Activated CD8-positive, alpha-beta T cell treated with anti-CD3 and anti-CD28 coated beads, Interleukin-2, amount 10 ng/mL, durations not matched to agents 7 days and 5 days (primary cell): ENCODE measurements at regions of chr19 and their contacts with region 1.

Region 1: DNA sequence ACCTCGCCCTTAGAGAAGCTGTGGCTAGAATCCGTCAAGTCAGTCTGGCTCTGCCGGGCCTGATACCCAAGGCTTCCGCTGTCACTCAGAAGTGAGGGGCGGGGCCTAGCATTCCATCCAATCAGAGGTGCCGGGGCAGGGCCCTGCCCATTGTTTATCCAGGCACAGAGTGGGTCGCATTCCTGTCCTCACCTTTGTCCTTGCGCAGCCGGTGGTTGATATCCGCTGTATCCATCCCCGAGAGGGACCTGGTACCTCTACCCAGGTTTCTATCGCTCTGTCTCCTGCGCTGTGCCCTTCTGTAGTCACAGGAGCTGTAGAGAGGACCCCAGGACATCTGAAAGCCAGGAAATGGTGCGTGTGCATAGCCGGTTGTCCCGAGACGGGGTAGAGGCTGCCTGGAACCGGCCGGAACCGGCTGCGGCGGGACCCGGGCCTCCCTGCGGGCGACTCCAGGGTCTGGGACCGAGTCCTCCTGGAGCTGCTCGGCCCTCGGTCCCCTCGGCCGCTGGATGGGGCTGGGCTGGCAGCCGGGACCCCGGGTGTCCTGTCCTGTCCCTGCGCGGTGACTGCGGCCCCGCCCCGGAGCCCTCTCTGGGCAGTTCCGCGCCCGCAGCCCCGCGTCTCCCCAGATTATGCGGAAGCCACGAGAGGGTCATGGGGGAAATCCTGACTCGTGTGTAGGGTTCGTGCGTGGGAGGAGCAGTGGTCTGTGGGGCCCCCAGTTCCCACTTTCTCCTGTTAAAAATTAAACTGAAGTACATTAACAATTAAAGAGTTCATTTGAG is at the start of gene ZNF763:
- DNase-seq: peak; percentile 94
- ATAC-seq: peak; percentile 97
- H3K4me3 Mint-ChIP-seq: peak within 1 kb of the TSS; percentile 88
- H3K27ac Mint-ChIP-seq: peak within 1 kb of the TSS; percentile 88
- H3K4me1 Mint-ChIP-seq: peaks cover 27% of the 10 kb centered on the region
- H3K27me3 Mint-ChIP-seq: no peaks in the 10 kb centered on the region
- total RNA-seq, gene ZNF763: 2.0 to 2.3 TPM

Region 2: DNA sequence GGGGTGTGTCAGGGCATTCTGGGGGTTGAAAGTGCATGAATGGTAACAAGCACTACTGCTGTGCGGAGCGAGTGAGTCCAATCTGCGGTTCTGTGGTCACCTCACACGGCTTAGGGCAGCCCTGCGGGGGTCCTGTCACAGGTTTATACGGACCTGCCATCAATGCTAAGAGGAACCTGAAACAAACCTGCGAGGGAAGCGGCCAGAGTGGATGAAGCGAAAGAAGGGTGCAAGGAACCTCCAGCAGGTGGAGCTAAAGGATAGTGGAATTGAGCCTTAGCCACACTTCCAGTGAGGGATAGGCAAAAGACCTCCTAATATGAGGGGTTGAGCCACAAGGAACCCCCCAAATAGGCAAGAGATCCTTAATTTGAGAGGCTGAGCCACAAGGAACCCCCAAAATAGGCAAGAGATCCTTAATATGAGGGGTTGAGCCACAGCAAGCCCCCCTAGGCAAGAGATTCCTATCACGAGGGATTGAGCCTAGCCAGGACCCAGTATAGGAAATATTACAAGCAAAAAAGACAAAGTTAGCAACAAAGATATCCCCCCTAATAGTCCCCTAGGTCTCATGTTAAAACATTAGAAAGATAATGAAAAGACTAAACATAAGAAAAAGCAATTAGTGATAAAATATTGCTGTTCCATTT is 83.8 kb before region 1 on chr19:
- CTCF ChIA-PET with region 1: interaction called, 10 read pairs
- POLR2A ChIA-PET with region 1: no interaction called
- DNase-seq: peak; percentile 77
- ATAC-seq: peak; percentile 82
- H3K4me3 Mint-ChIP-seq: no peak overlapping the region
- H3K27ac Mint-ChIP-seq: no peak overlapping the region
- H3K4me1 Mint-ChIP-seq: no peaks in the 10 kb centered on the region
- H3K27me3 Mint-ChIP-seq: peaks cover 6% of the 10 kb centered on the region

Region 3: DNA sequence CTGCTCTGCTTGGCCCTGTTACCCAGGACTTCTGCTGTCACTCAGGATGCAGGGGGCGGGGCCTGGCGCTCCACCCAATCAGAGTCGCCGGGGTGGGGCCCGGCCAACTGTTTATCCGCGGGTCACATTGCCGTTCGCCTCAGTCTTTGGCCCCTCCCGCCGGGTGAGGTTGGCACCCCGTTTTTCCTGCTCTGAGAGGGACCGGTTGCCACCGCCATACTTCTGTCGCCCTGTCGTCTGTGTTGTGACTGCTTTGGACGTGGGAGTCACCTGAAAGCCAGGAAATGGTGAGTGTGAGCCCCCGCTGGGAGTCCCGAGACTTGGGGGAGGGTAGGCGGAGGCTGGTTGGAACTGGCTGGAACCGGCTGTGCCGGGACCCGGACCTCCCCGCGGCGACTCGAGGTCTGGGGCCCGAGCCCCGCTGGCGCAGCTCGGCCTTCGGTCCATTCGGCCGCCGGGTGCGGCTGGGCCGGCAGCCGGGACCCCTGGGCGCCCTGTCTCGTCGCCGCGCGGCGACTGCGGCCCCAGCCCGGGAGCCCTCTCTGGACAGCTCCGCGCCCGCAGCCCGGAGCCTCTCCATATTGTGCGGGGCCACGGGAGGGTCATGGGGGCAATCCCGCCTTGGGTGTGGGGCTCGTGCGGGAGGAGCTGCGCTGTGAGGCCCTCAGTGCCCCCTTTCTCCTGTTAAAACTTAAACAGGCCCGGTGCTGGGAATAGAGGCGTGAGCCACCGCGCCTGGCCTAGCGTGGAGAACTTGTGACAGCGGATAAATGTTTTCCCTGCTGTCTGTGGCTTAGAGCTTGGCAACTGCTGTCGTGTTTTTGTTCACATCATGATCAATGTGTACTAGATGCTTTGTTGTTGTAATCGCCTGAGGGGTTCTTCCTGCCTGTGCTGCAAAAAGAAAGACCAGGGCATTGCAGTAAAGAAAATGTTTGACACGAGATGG is 99.8 kb after region 1 on chr19 and contains the start of gene ZNF844:
- CTCF ChIA-PET with region 1: interaction called, 10 read pairs
- POLR2A ChIA-PET with region 1: no interaction called
- DNase-seq: peak; percentile 78
- ATAC-seq: peak; percentile 79
- H3K4me3 Mint-ChIP-seq: peak within 1 kb of the TSS; percentile 79
- H3K27ac Mint-ChIP-seq: peak within 1 kb of the TSS; percentile 82
- H3K4me1 Mint-ChIP-seq: peaks cover 3% of the 10 kb centered on the region
- H3K27me3 Mint-ChIP-seq: no peaks in the 10 kb centered on the region
- total RNA-seq, gene ZNF844: 1.7 to 2.4 TPM